CD8-positive, alpha-beta T cell (primary cell): ENCODE measurements at regions of chr11 and their contacts with region 1.

Region 1: GRCh38 chr11:123407130-123407995 is 22.7 kb upstream of the GRAMD1B start:
- DNase-seq: peak; percentile 30 to 82 (median 66)
- ATAC-seq: peak; percentile 77
- H3K4me3 ChIP-seq: no peak overlapping the region
- H3K4me3 Mint-ChIP-seq: no peak overlapping the region
- H3K27ac ChIP-seq: no peak overlapping the region
- H3K27ac Mint-ChIP-seq: no peak overlapping the region
- H3K4me1 ChIP-seq: no peaks in the 10 kb centered on the region
- H3K4me1 Mint-ChIP-seq: peaks cover 3% of the 10 kb centered on the region
- H3K27me3 ChIP-seq: no peaks in the 10 kb centered on the region
- H3K27me3 Mint-ChIP-seq: peaks cover 3% of the 10 kb centered on the region
- CTCF ChIP-seq: peak; percentile 52

Region 2: DNA sequence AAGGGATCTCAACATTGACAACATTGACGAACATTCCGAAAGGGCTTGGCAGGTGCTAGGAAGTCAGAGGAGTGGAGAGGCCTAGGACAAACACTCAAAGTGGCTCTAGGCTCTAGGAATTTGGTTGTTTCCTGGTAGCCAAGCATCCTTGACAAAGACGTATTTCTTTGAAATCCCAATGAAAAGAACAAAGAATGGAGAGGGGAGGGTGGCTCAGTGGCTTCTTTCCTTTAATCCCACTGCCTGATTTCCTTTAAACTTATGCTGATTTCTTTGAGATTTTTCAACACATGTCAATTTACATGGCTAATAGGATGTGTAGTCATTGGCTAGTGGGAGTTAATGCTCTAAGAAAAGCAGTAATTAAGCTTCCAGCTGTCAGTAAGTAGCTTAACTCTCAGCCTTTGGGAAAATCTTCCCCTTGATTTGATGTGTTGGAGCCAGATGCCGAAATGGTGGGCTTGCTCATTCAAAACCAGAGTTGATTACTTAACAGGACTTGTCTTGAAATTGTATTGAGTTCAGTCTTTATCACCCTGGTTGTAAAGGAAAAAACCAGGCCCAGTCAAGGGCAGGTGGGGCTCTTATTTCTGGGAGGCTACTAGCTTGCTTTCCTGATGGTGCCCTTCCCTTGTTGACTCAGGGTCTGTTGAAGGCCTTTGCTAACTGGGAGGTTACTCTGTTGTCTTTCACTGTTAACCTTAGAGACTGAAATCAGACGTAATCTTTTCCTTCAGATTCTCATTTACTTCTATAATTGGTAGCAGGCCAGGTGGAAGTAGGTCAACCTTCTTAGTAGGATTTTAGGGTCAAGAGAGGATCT is 1910.0 kb before region 1 on chr11:
- CTCF ChIA-PET with region 1: no interaction called
- POLR2A ChIA-PET with region 1: no interaction called
- intact Hi-C with region 1: no loop called
- DNase-seq: no peak
- ATAC-seq: no peak
- H3K4me3 ChIP-seq: no peak overlapping the region
- H3K4me3 Mint-ChIP-seq: no peak overlapping the region
- H3K27ac ChIP-seq: no peak overlapping the region
- H3K27ac Mint-ChIP-seq: peak overlapping the region; percentile 69
- H3K4me1 ChIP-seq: peaks cover 27% of the 10 kb centered on the region
- H3K4me1 Mint-ChIP-seq: peaks cover 60% of the 10 kb centered on the region
- H3K27me3 ChIP-seq: no peaks in the 10 kb centered on the region
- H3K27me3 Mint-ChIP-seq: no peaks in the 10 kb centered on the region
- CTCF ChIP-seq: no peak

Region 3: GRCh38 chr11:123419731-123420452 is 12.5 kb after region 1 on chr11:
- CTCF ChIA-PET with region 1: interaction called, 41 read pairs
- POLR2A ChIA-PET with region 1: no interaction called
- intact Hi-C with region 1: no loop called
- DNase-seq: no peak
- ATAC-seq: no peak
- H3K4me3 ChIP-seq: no peak overlapping the region
- H3K4me3 Mint-ChIP-seq: no peak overlapping the region
- H3K27ac ChIP-seq: no peak overlapping the region
- H3K27ac Mint-ChIP-seq: no peak overlapping the region
- H3K4me1 ChIP-seq: no peaks in the 10 kb centered on the region
- H3K4me1 Mint-ChIP-seq: no peaks in the 10 kb centered on the region
- H3K27me3 ChIP-seq: no peaks in the 10 kb centered on the region
- H3K27me3 Mint-ChIP-seq: peaks cover 25% of the 10 kb centered on the region
- CTCF ChIP-seq: no peak

Region 4: GRCh38 chr11:123438191-123438627 is 30.8 kb after region 1 on chr11:
- CTCF ChIA-PET with region 1: interaction called, 23 read pairs
- POLR2A ChIA-PET with region 1: no interaction called
- intact Hi-C with region 1: no loop called
- DNase-seq: no peak
- ATAC-seq: no peak
- H3K4me3 ChIP-seq: no peak overlapping the region
- H3K4me3 Mint-ChIP-seq: no peak overlapping the region
- H3K27ac ChIP-seq: no peak overlapping the region
- H3K27ac Mint-ChIP-seq: no peak overlapping the region
- H3K4me1 ChIP-seq: no peaks in the 10 kb centered on the region
- H3K4me1 Mint-ChIP-seq: peaks cover 15% of the 10 kb centered on the region
- H3K27me3 ChIP-seq: no peaks in the 10 kb centered on the region
- H3K27me3 Mint-ChIP-seq: no peaks in the 10 kb centered on the region
- CTCF ChIP-seq: no peak

Region 5: DNA sequence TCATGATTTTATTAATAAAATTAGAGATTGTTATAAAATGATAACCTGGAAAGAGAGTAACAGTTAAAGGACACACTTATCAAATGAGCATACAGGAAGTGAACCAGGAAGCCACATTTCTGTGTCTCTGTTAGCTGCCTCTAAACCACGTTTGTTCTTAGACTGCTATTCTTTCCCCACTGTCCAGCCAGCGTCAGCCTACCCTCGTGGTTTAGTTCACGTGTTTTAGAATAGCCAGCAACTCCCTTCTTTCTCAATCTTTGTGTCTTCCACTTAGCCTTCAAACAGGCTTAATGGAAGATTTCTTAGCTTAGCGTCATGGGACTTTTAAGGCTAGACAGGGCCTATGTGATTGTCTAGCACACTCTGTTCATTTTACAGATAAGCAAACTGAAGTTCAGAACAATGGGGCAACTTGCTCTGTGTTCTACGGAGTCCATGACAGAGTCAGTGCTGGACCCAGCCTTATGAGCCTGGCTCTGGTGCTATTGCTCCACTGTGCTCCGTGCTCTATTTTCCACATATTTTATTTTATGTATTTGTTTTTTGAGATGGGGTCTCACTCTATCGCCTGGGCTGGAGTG is 49.9 kb after region 1 on chr11:
- CTCF ChIA-PET with region 1: interaction called, 11 read pairs
- POLR2A ChIA-PET with region 1: no interaction called
- intact Hi-C with region 1: no loop called
- DNase-seq: peak in 4 of 9 experiments; percentile 13 to 61 (median 30)
- ATAC-seq: peak; percentile 48
- H3K4me3 ChIP-seq: no peak overlapping the region
- H3K4me3 Mint-ChIP-seq: peak overlapping the region; percentile 23
- H3K27ac ChIP-seq: peak overlapping the region; percentile 29 to 62
- H3K27ac Mint-ChIP-seq: peak overlapping the region; percentile 91
- H3K4me1 ChIP-seq: peaks cover 26% of the 10 kb centered on the region
- H3K4me1 Mint-ChIP-seq: peaks cover 28% of the 10 kb centered on the region
- H3K27me3 ChIP-seq: no peaks in the 10 kb centered on the region
- H3K27me3 Mint-ChIP-seq: no peaks in the 10 kb centered on the region
- CTCF ChIP-seq: no peak

Region 6: GRCh38 chr11:123478352-123478987 is 71.1 kb after region 1 on chr11:
- CTCF ChIA-PET with region 1: interaction called, 251 read pairs
- POLR2A ChIA-PET with region 1: interaction called, 16 read pairs
- intact Hi-C with region 1: loop called in 1 of 2 experiments (anchors 1 kb)
- DNase-seq: peak in 5 of 9 experiments; percentile 12 to 76 (median 59)
- ATAC-seq: peak; percentile 37
- H3K4me3 ChIP-seq: peak overlapping the region in 1 of 2 experiments; percentile 2
- H3K4me3 Mint-ChIP-seq: peak overlapping the region; percentile 13
- H3K27ac ChIP-seq: no peak overlapping the region
- H3K27ac Mint-ChIP-seq: no peak overlapping the region
- H3K4me1 ChIP-seq: no peaks in the 10 kb centered on the region
- H3K4me1 Mint-ChIP-seq: peaks cover 18% of the 10 kb centered on the region
- H3K27me3 ChIP-seq: no peaks in the 10 kb centered on the region
- H3K27me3 Mint-ChIP-seq: no peaks in the 10 kb centered on the region
- CTCF ChIP-seq: peak; percentile 93

Region 7: GRCh38 chr11:123580557-123581275 is 173.4 kb after region 1 on chr11:
- CTCF ChIA-PET with region 1: interaction called, 9 read pairs
- POLR2A ChIA-PET with region 1: no interaction called
- intact Hi-C with region 1: loop called in 1 of 2 experiments (anchors 5 kb)
- DNase-seq: peak; percentile 24 to 78 (median 62)
- ATAC-seq: peak; percentile 96
- H3K4me3 ChIP-seq: no peak overlapping the region
- H3K4me3 Mint-ChIP-seq: no peak overlapping the region
- H3K27ac ChIP-seq: no peak overlapping the region
- H3K27ac Mint-ChIP-seq: no peak overlapping the region
- H3K4me1 ChIP-seq: peaks cover 8% of the 10 kb centered on the region
- H3K4me1 Mint-ChIP-seq: peaks cover 18% of the 10 kb centered on the region
- H3K27me3 ChIP-seq: no peaks in the 10 kb centered on the region
- H3K27me3 Mint-ChIP-seq: no peaks in the 10 kb centered on the region
- CTCF ChIP-seq: peak; percentile 90